Ascending aorta (tissue), 2 donors: ENCODE measurements at regions of chr15 and their contacts with region 1.

Region 1: GRCh38 chr15:77543159-77543882 is 89.4 kb downstream of the LINGO1 start:
- DNase-seq: peak; percentile 20 to 89
- H3K4me3 ChIP-seq: peak overlapping the region; percentile 46 to 56
- H3K27ac ChIP-seq: no peak overlapping the region
- H3K4me1 ChIP-seq: peaks cover 0 to 7% of the 10 kb centered on the region in 2 donors
- H3K27me3 ChIP-seq: no peaks in the 10 kb centered on the region
- CTCF ChIP-seq: peak; percentile 96 to 98 (median 98)

Region 2: GRCh38 chr15:76939715-76940114 is 603.6 kb before region 1 on chr15:
- intact Hi-C with region 1: loop called (anchors 2 kb)
- DNase-seq: no peak
- H3K4me3 ChIP-seq: no peak overlapping the region
- H3K27ac ChIP-seq: no peak overlapping the region
- H3K4me1 ChIP-seq: peaks cover 0 to 5% of the 10 kb centered on the region in 2 donors
- H3K27me3 ChIP-seq: no peaks in the 10 kb centered on the region
- CTCF ChIP-seq: no peak

Region 3: GRCh38 chr15:76973362-76973743 is 570.0 kb before region 1 on chr15:
- intact Hi-C with region 1: loop called (anchors 1 kb)
- DNase-seq: no peak
- H3K4me3 ChIP-seq: peak overlapping the region; percentile 42 to 49
- H3K27ac ChIP-seq: peak overlapping the region; percentile 85 to 86
- H3K4me1 ChIP-seq: peaks cover 4 to 14% of the 10 kb centered on the region in 2 donors
- H3K27me3 ChIP-seq: no peaks in the 10 kb centered on the region
- CTCF ChIP-seq: peak; percentile 65 to 80 (median 78)

Region 4: DNA sequence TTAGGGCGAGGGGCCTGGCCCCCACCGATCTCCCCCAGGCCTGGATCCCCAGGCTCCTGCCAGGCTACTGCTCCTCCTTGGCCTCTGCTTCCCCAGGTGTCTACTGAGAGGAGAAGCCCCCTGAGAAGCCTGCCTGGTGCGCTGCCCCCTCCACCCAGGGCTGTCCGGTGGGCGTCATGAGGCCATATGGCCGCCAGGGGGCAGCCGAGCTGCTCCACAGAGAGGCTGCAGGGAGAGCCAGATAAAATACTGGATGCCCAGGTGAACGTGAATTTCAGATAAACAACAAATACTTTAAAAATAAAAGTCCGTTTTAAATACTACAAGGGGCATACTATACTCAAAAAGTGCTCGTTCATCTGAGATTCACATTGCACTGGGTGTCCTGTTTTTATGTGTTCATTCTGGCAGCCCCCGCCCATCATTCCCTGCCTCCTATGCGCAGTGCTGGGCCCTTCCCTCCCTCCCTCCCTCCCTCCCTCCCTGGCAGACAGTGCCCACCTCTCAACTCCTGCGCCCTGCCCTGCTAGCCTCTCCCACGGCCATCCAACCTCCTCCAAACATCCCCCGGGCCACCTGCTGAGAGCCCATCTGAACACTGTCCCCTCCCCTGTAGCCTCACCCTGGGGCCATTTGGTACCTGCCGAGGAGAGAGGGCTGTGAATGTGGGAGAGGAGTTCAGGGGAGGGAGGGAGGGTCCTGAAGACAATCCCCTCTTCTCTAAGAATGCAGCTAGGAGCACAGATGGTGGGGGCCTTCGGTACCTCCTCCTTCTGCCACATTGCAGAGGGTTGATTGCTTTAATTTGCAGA is 518.8 kb before region 1 on chr15:
- intact Hi-C with region 1: loop called (anchors 2 kb)
- DNase-seq: peak in 1 of 2 donors; percentile 82
- H3K4me3 ChIP-seq: no peak overlapping the region
- H3K27ac ChIP-seq: no peak overlapping the region
- H3K4me1 ChIP-seq: no peaks in the 10 kb centered on the region
- H3K27me3 ChIP-seq: no peaks in the 10 kb centered on the region
- CTCF ChIP-seq: peak; percentile 90 to 97 (median 97)

Region 5: GRCh38 chr15:77107531-77108355 is 435.6 kb before region 1 on chr15:
- intact Hi-C with region 1: loop called (anchors 2 kb)
- DNase-seq: peak in 1 of 2 donors; percentile 64
- H3K4me3 ChIP-seq: no peak overlapping the region
- H3K27ac ChIP-seq: no peak overlapping the region
- H3K4me1 ChIP-seq: peaks cover 0 to 4% of the 10 kb centered on the region in 2 donors
- H3K27me3 ChIP-seq: no peaks in the 10 kb centered on the region
- CTCF ChIP-seq: peak; percentile 16 to 55 (median 55)

Region 6: GRCh38 chr15:77118882-77119321 is 424.4 kb before region 1 on chr15:
- intact Hi-C with region 1: loop called (anchors 1 kb)
- DNase-seq: peak in 1 of 2 donors; percentile 67
- H3K4me3 ChIP-seq: no peak overlapping the region
- H3K27ac ChIP-seq: no peak overlapping the region
- H3K4me1 ChIP-seq: peaks cover 0 to 3% of the 10 kb centered on the region in 2 donors
- H3K27me3 ChIP-seq: no peaks in the 10 kb centered on the region
- CTCF ChIP-seq: peak; percentile 55 to 73 (median 71)

Region 7: DNA sequence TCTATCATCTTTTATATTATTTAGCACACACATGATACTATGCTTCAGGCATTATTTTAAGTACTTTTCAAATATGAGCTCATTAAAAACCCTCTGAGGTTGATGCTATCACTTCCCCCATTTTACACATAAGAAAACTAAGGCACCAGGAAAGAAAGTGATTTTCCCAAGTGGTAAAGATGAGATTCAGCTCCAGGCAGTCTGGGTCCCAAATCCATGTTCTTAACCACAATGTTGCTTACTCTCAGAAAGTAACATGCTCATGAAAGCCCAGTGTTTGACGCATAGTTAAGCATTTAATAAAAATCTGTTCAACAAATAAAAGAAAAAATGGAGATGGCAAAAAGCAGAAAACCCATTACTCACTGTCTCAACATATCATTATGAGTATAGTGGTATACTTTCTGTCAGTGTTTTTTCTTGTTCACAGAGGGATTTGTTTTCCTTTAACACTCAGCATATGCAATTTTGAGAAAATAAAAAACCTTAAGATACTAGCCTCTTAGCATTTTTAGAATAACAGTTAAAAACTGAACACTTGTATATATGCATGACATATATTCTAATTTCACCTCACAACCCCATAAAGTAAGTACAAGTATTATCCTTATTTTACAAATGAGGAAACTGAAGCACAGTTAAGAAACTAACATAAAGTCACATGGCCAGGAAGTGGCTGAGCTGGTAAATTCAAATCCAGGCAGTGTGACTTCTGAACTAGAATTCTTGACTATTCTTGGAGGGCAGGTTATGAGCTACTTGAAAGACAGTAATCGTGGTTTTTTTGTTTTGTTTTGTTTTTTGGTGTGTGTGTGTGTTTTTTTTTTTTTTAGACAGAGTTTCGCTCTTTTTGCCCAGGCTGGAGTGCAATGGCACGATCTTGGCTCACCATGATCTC is 133.8 kb before region 1 on chr15:
- intact Hi-C with region 1: no loop called
- DNase-seq: no peak
- H3K4me3 ChIP-seq: no peak overlapping the region
- H3K27ac ChIP-seq: no peak overlapping the region
- H3K4me1 ChIP-seq: no peaks in the 10 kb centered on the region
- H3K27me3 ChIP-seq: no peaks in the 10 kb centered on the region
- CTCF ChIP-seq: no peak

Region 8: GRCh38 chr15:77419836-77420609 is 123.3 kb before region 1 on chr15 and contains the start of gene PEAK1:
- intact Hi-C with region 1: loop called (anchors 5 kb)
- DNase-seq: peak; percentile 99 to 100
- H3K4me3 ChIP-seq: peak within 1 kb of the TSS; percentile 76 to 99
- H3K27ac ChIP-seq: peak within 1 kb of the TSS; percentile 91 to 97
- H3K4me1 ChIP-seq: peaks cover 0 to 20% of the 10 kb centered on the region in 2 donors
- H3K27me3 ChIP-seq: no peaks in the 10 kb centered on the region
- CTCF ChIP-seq: no peak
- total RNA-seq, gene PEAK1: 53.7 TPM

Region 9: GRCh38 chr15:78149068-78149804 is 605.9 kb after region 1 on chr15 and contains the start of gene IDH3A:
- intact Hi-C with region 1: no loop called
- DNase-seq: peak; percentile 91 to 99
- H3K4me3 ChIP-seq: peak within 1 kb of the TSS; percentile 79 to 90
- H3K27ac ChIP-seq: peak within 1 kb of the TSS; percentile 81 to 87
- H3K4me1 ChIP-seq: peaks cover 5 to 14% of the 10 kb centered on the region in 2 donors
- H3K27me3 ChIP-seq: no peaks in the 10 kb centered on the region
- CTCF ChIP-seq: no peak
- total RNA-seq, gene IDH3A: 17.7 TPM